Dorsolateral prefrontal cortex (tissue), 120 donors: ENCODE measurements at regions of chr11 and their contacts with region 1.

Region 1: DNA sequence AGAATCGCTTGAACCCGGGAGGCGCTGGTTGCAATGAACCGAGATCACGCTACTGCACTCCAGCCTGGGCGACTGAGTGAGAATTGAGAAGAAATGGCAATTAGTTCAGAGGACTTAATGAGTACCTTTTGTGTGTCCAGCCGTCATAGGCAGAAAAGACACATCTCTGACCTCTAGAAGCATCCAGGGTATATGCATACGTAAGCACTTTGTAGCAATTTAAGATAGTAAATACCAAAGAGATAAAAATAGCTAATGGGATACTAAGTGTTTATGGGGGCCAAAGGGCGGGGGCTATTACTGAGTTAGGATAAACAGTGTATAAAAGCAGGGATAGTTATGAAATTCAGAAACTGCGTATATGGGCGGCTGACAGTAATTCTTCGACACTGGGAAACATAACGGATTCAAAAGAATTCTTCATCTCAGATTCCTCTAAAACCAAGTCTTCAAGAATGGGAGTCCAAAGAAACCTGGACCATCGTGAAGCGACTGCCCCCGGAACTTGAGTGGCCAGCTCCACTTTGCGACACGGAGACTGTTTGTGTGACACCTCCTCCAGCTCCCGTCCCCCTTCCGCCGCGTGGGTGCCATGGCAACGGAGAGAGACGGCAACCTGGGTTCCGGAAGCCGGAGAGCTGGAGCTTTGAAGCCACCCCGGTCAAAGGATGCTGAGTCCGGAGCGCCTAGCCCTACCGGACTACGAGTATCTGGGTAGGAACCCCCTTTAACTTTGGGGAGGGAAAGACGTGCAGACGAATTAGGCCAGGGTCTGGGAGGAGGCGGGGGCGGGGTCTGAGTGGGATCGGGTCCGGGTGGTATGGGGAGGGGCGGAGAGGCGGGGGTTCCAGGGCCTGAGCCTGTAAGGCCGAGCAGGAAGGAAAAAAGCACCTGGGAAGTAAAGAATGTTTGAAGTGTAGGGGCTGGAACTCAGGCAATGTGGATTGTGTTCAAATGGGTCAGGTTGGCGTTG is at the start of gene CSTPP1:
- DNase-seq: peak; percentile 79 to 92 (median 88)
- H3K4me3 ChIP-seq: peak within 1 kb of the TSS; percentile 40 to 87 (median 70)
- H3K27ac ChIP-seq: peak within 1 kb of the TSS in 51 of 59 donors; percentile 9 to 85 (median 68)
- H3K27me3 ChIP-seq: no peaks in the 10 kb centered on the region
- CTCF ChIP-seq: peak in 37 of 56 donors; percentile 5 to 57 (median 32)
- total RNA-seq, gene CSTPP1: 71.1 to 144 (median 102) TPM

Region 2: DNA sequence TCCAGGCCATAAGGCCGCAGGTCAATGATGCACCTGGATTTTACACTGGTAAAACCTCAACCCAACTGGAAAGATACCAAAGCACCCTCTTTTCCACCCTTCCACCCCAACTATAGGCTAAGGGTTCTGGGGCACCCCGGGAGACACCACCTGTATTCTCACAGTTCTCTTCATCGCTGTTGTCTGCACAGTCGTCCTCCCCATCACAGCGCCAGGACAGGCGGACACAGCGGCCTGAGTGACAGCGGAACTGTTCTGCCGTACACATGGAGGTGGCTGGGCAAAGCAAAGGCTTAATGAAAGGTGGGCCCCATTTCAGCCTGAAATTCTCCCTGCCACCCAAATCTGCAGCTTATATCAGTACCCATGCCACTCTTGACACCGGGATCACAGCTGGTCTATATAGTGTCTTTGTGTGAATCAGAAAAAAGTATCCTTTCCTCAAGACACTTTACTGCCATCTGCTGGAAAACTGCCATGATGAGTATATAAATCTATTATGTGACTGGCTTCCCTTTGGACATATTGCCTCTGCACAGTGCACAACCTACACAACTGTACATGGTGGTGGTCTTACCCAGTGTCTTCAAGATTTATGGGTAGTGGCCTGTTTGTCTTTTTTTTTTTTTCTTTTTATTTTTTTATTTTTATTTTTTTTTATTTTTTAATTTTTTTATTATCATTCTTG is 39.6 kb before region 1 on chr11:
- intact Hi-C with region 1: loop called in 1 of 2 experiments (anchors 1 kb)
- DNase-seq: no peak
- H3K4me3 ChIP-seq: no peak overlapping the region
- H3K27ac ChIP-seq: peak overlapping the region in 27 of 59 donors; percentile 6 to 78 (median 53)
- H3K27me3 ChIP-seq: no peaks in the 10 kb centered on the region
- CTCF ChIP-seq: peak in 21 of 56 donors; percentile 8 to 36 (median 16)

Region 3: DNA sequence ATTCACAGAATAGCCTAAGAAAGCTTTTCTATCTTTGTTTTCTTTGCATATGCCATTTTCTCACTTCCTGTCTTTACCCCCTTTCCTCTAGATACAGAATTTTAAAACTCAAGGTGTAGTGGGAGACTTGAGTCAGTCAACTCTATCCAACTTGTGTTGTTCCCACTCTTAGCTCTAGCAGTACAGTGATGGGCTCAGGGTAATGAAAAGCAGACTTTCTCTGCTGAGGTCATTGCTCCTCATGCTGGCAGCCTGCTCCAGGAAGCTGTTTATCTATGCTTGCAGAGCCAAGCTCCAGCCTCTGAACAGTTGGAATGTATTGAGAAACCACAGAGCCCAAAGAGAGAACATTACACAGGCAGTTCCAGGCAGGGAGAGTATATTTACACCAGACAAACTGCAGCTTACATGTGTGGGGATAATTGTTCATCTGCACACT is 68.2 kb after region 1 on chr11:
- intact Hi-C with region 1: loop called in 1 of 2 experiments (anchors 2 kb)
- DNase-seq: peak; percentile 30 to 76 (median 66)
- H3K4me3 ChIP-seq: peak overlapping the region in 2 of 59 donors; percentile 19 to 20
- H3K27ac ChIP-seq: peak overlapping the region; percentile 8 to 93 (median 78)
- H3K27me3 ChIP-seq: no peaks in the 10 kb centered on the region
- CTCF ChIP-seq: peak in 13 of 56 donors; percentile 9 to 36 (median 19)

Region 4: DNA sequence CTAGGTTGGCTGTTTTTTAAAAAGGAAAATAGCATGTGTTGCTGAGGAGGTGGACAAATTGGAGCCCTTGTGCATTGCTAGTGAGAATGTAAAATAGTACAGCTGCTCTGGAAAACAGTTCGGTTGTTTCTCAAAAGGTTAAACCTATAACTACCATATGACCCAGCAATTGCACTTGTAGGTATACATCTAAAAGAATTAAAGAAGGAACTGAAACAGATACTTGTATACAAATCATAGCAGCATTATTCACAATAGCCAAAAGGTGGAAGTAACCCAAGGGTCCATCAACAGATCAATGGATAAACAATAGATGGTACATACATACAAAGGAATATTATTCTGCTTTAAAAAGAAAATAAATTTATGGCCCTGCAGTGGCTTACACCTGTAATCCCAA is 111.5 kb after region 1 on chr11:
- intact Hi-C with region 1: no loop called
- DNase-seq: no peak
- H3K4me3 ChIP-seq: no peak overlapping the region
- H3K27ac ChIP-seq: no peak overlapping the region
- H3K27me3 ChIP-seq: no peaks in the 10 kb centered on the region
- CTCF ChIP-seq: no peak

Region 5: GRCh38 chr11:47225552-47226400 is 289.4 kb after region 1 on chr11:
- intact Hi-C with region 1: no loop called
- DNase-seq: no peak
- H3K4me3 ChIP-seq: no peak overlapping the region
- H3K27ac ChIP-seq: no peak overlapping the region
- H3K27me3 ChIP-seq: no peaks in the 10 kb centered on the region
- CTCF ChIP-seq: no peak